ENCODE measurements at regions of chr19 and their contacts with region 1.

Region 1: DNA sequence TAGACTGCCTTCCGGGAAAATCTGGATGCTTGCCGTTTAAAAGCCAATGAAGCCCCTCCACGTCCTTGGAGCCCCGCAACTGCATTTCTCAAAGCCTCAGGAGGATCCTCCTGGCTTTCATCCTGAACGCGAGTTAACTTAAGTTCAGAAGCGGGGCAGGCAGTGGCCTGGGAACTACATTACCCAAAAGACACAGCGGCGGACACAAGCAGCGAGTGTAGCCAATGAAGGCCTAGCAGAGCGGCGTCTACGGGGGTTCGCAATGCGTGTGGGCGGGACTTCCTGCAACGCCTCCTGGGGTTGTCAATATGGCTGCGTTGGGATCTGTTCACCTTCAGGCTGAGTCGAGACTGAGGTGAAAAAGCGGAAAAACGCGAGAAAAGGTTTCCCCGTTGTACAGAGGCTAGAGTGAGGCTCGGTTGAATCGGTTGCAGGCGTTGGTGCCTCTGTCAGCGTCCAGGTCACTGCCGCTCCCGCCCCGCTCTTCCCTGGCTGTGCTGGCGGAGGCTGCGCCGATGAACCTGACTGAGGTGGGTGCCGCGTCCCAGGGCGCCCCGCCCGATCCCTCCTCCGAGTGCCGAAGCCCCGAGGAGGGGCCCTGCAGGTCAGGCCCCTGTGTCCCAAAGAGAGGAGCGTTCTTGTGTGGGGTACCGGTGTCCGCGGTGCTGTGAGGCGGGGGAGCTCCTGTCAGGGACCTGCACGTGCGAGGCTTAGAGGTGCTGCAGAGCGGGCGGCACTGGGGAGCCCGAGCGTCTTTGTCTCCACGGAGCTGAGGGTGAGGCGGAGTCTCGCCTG is at the start of gene ZNF17:
- DNase-seq: peak; percentile 85 to 95 (median 90)
- H3K4me3 ChIP-seq: peak within 1 kb of the TSS; percentile 49 to 90
- H3K4me3 Mint-ChIP-seq: peak within 1 kb of the TSS; percentile 92 to 97 (median 96)
- H3K27ac ChIP-seq: peak within 1 kb of the TSS; percentile 73
- H3K27ac Mint-ChIP-seq: peak within 1 kb of the TSS; percentile 79 to 95 (median 94)
- H3K4me1 ChIP-seq: peaks cover 16% of the 10 kb centered on the region
- H3K4me1 Mint-ChIP-seq: peaks cover 23 to 42% (median 29%) of the 10 kb centered on the region in 4 donors
- H3K27me3 ChIP-seq: no peaks in the 10 kb centered on the region
- H3K27me3 Mint-ChIP-seq: no peaks in the 10 kb centered on the region
- total RNA-seq, gene ZNF17: 28.3 to 29.9 TPM

Region 2: GRCh38 chr19:57279418-57280066 is 131.5 kb before region 1 on chr19:
- CTCF ChIA-PET with region 1: no interaction called
- POLR2A ChIA-PET with region 1: no interaction called
- intact Hi-C with region 1: loop called (anchors 1 kb)
- DNase-seq: peak in 4 of 5 donors; percentile 77 to 85 (median 84)
- H3K4me3 ChIP-seq: peak overlapping the region; percentile 68 to 74
- H3K4me3 Mint-ChIP-seq: peak overlapping the region in 1 of 8 donors; percentile 20
- H3K27ac ChIP-seq: peak overlapping the region; percentile 100
- H3K27ac Mint-ChIP-seq: peak overlapping the region in 1 of 7 donors; percentile 74
- H3K4me1 ChIP-seq: peaks cover 38% of the 10 kb centered on the region
- H3K4me1 Mint-ChIP-seq: peaks cover 0 to 33% (median 23%) of the 10 kb centered on the region in 4 donors
- H3K27me3 ChIP-seq: no peaks in the 10 kb centered on the region
- H3K27me3 Mint-ChIP-seq: no peaks in the 10 kb centered on the region

Region 3: GRCh38 chr19:57350877-57351805 is 59.9 kb before region 1 on chr19 and contains the start of gene ZNF304:
- CTCF ChIA-PET with region 1: no interaction called
- POLR2A ChIA-PET with region 1: no interaction called
- intact Hi-C with region 1: no loop called
- DNase-seq: peak; percentile 78 to 85 (median 84)
- H3K4me3 ChIP-seq: peak within 1 kb of the TSS; percentile 43 to 93
- H3K4me3 Mint-ChIP-seq: peak within 1 kb of the TSS; percentile 94 to 99 (median 96)
- H3K27ac ChIP-seq: peak within 1 kb of the TSS; percentile 73
- H3K27ac Mint-ChIP-seq: peak within 1 kb of the TSS; percentile 83 to 97 (median 96)
- H3K4me1 ChIP-seq: peaks cover 20% of the 10 kb centered on the region
- H3K4me1 Mint-ChIP-seq: peaks cover 28 to 39% (median 31%) of the 10 kb centered on the region in 4 donors
- H3K27me3 ChIP-seq: no peaks in the 10 kb centered on the region
- H3K27me3 Mint-ChIP-seq: peaks cover 2% of the 10 kb centered on the region in 2 donors
- total RNA-seq, gene ZNF304: 13.3 to 13.6 TPM

Region 4: DNA sequence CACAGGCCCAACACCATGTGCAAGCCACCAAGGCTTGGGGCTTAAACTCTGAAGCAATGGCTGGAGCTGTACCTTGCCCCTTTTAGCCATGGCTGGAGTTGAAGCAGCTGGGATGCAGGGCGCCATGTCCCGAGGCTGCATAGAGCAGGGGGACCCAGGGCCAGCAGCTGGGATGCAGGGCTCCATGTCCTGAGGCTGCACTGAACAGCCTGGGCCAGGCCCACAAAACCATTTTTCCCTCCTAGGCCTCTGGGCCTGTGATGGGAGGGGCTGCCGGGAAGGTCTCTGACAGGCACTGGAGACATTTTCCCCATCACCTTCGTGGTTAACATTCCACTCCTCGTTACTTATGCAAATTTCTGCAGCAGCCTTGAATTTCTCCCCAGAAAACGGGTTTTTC is 36.9 kb before region 1 on chr19:
- CTCF ChIA-PET with region 1: no interaction called
- POLR2A ChIA-PET with region 1: no interaction called
- intact Hi-C with region 1: no loop called
- DNase-seq: no peak
- H3K4me3 ChIP-seq: no peak overlapping the region
- H3K4me3 Mint-ChIP-seq: no peak overlapping the region
- H3K27ac ChIP-seq: no peak overlapping the region
- H3K27ac Mint-ChIP-seq: no peak overlapping the region
- H3K4me1 ChIP-seq: no peaks in the 10 kb centered on the region
- H3K4me1 Mint-ChIP-seq: peaks cover 0 to 3% (median 2%) of the 10 kb centered on the region in 4 donors
- H3K27me3 ChIP-seq: no peaks in the 10 kb centered on the region
- H3K27me3 Mint-ChIP-seq: no peaks in the 10 kb centered on the region

Region 5: GRCh38 chr19:57389730-57390598 is 21.1 kb before region 1 on chr19 and contains the start of gene ZNF548:
- CTCF ChIA-PET with region 1: interaction called, 8 read pairs
- POLR2A ChIA-PET with region 1: interaction called, 5 read pairs
- intact Hi-C with region 1: loop called (anchors 1 kb)
- DNase-seq: peak; percentile 93 to 100 (median 95)
- H3K4me3 ChIP-seq: peak within 1 kb of the TSS; percentile 52 to 62
- H3K4me3 Mint-ChIP-seq: peak within 1 kb of the TSS; percentile 97 to 99 (median 98)
- H3K27ac ChIP-seq: peak within 1 kb of the TSS; percentile 95
- H3K27ac Mint-ChIP-seq: peak within 1 kb of the TSS; percentile 98 to 100 (median 99)
- H3K4me1 ChIP-seq: peaks cover 22% of the 10 kb centered on the region
- H3K4me1 Mint-ChIP-seq: peaks cover 22 to 41% (median 31%) of the 10 kb centered on the region in 4 donors
- H3K27me3 ChIP-seq: no peaks in the 10 kb centered on the region
- H3K27me3 Mint-ChIP-seq: peaks cover 0 to 3% of the 10 kb centered on the region in 2 donors
- total RNA-seq, gene ZNF548: 85.4 to 103 TPM

Region 6: DNA sequence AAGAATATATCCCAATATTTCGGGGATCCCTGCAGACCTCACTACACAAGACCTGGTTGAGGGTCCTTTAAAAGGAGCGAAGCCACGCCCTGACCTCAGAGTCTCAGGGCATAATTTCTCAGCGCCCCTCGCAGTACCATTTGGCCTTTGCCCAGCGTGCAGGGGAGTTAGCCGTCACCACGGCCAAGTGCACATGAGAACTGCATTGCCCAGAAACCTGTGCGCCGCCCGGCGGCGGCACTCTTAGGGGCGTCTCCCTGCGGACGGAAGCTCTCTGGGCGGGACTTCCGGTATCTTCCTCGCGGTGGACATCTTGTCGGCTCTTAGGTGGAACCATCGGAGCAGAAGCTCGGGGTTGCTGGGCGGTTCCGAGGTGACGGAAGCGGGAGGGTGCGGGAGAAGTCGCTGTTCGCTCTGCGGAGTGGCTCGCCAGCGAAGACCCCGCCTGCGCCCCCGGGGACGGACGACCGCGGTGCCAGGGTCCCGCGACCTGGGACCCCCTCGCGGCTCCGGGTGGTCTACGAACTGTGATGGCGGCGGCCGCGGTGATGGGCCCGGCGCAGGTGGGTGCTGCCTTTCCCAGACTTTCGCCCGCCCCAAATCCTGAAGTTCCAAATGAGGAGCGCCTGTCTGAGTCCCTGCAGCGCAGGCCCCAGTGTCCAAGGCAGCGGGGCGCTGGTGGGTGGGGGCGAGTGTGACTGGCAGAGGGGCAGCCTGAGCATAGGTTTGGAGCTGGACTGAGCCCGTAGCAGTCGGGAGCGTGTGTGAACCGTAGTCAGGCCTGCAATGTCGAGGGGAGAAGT is 203.1 kb after region 1 on chr19 and contains the start of gene ZNF134:
- CTCF ChIA-PET with region 1: no interaction called
- POLR2A ChIA-PET with region 1: no interaction called
- intact Hi-C with region 1: loop called (anchors 1 kb)
- DNase-seq: peak; percentile 86 to 88 (median 87)
- H3K4me3 ChIP-seq: peak within 1 kb of the TSS; percentile 78 to 92
- H3K4me3 Mint-ChIP-seq: peak within 1 kb of the TSS; percentile 89 to 94 (median 92)
- H3K27ac ChIP-seq: peak within 1 kb of the TSS; percentile 58
- H3K27ac Mint-ChIP-seq: peak within 1 kb of the TSS; percentile 57 to 90 (median 88)
- H3K4me1 ChIP-seq: peaks cover 18% of the 10 kb centered on the region
- H3K4me1 Mint-ChIP-seq: peaks cover 17 to 42% (median 32%) of the 10 kb centered on the region in 4 donors
- H3K27me3 ChIP-seq: no peaks in the 10 kb centered on the region
- H3K27me3 Mint-ChIP-seq: no peaks in the 10 kb centered on the region
- total RNA-seq, gene ZNF134: 32.1 to 32.3 TPM

Region 7: DNA sequence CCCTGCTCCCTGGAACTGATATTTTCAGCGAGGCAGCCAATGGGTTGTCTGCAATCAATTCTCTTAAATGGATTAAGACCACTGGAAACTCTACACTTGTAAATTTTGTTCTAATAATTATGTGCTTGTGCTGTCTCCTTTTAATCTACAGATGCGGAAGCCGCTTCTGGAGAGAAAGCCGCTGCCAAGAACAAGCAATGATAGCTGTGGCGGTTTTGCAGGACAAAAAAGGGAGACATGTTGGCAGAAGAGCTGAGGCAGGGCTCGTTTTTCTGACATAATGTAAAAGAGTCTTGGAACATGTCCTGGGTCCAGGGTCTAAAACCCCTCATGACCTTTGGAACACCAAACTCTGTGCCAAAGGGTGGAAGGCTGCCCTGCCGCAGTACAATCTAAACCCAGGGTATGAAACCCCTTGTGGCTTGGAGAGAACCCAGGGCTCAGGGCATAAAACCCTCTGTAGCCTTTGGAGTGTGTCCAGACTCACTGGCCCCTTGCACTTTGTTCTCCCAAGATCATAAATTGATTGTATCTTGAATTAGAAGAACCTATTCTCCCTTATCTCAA is 492.6 kb after region 1 on chr19:
- CTCF ChIA-PET with region 1: no interaction called
- POLR2A ChIA-PET with region 1: no interaction called
- intact Hi-C with region 1: loop called (anchors 1 kb)
- DNase-seq: no peak
- H3K4me3 ChIP-seq: no peak overlapping the region
- H3K4me3 Mint-ChIP-seq: no peak overlapping the region
- H3K27ac ChIP-seq: no peak overlapping the region
- H3K27ac Mint-ChIP-seq: no peak overlapping the region
- H3K4me1 ChIP-seq: peaks cover 3% of the 10 kb centered on the region
- H3K4me1 Mint-ChIP-seq: peaks cover 6 to 7% (median 6%) of the 10 kb centered on the region in 4 donors
- H3K27me3 ChIP-seq: no peaks in the 10 kb centered on the region
- H3K27me3 Mint-ChIP-seq: no peaks in the 10 kb centered on the region

Region 8: DNA sequence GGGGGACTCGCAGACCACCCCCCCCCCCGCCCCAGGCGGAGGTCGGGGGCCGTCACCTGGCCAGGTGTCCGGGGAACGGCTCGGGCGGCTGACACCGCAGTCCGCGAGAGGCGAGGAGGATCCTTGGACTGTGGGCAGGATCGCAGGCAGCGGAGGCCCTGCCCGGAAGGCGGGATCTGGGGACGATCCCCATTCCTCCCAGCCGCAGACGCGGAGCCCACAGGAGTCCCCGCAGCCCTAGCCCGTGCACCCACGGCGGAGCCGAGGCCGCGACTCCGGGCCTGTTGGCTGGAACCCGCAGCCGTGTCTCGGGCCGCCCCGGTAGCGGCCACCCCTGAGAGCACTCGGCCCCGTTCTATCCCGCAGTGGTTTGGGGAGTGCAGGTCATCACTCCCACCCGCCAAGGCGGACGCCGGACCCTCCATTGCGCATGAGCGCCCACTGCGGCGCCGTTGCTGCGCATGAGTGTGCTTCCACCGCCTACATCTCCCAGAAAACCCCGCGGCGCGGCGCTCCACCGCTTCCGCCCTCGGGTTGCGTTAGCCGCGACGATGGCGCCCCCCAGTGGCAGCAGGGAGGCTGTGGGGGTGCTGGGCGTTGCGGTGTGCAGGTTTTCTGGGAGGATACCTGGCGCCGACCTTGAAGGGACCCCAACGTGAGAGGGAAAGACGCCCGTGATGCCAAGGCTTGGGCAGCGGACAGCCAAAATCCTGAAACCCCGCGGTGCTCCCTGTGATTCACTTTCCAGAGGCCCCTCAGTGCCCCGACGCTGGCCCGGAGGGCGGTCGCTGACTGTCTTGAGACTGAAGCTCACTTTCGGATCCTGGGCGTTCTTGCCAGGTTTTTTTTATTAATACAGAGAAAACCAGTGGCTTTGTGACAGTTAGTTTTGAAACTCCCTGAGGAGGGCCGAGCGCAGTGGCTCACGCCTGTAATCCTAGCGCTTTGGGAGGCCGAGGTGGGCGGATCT is 743.9 kb after region 1 on chr19:
- CTCF ChIA-PET with region 1: interaction called, 10 read pairs
- POLR2A ChIA-PET with region 1: no interaction called
- intact Hi-C with region 1: loop called (anchors 1 kb)
- DNase-seq: peak; percentile 92 to 99 (median 96)
- H3K4me3 ChIP-seq: peak overlapping the region; percentile 88
- H3K4me3 Mint-ChIP-seq: peak overlapping the region; percentile 71 to 89 (median 84)
- H3K27ac ChIP-seq: peak overlapping the region; percentile 80
- H3K27ac Mint-ChIP-seq: peak overlapping the region; percentile 41 to 85 (median 69)
- H3K4me1 ChIP-seq: peaks cover 16% of the 10 kb centered on the region
- H3K4me1 Mint-ChIP-seq: peaks cover 5 to 24% (median 10%) of the 10 kb centered on the region in 4 donors
- H3K27me3 ChIP-seq: no peaks in the 10 kb centered on the region
- H3K27me3 Mint-ChIP-seq: no peaks in the 10 kb centered on the region

Measured in CD4-positive, alpha-beta memory T cell (primary cell).